ENCODE measurements at regions of chr6 and their contacts with region 1.

Region 1: GRCh38 chr6:46848684-46849360 is 55.6 kb downstream of the MEP1A start:
- DNase-seq: peak; percentile 52 to 66 (median 62)
- H3K4me3 ChIP-seq: peak overlapping the region in 5 of 7 experiments; percentile 35 to 63 (median 48)
- H3K27ac ChIP-seq: no peak overlapping the region
- H3K4me1 ChIP-seq: peaks cover 1 to 17% (median 4%) of the 10 kb centered on the region in 4 experiments
- H3K27me3 ChIP-seq: no peaks in the 10 kb centered on the region

Region 2: DNA sequence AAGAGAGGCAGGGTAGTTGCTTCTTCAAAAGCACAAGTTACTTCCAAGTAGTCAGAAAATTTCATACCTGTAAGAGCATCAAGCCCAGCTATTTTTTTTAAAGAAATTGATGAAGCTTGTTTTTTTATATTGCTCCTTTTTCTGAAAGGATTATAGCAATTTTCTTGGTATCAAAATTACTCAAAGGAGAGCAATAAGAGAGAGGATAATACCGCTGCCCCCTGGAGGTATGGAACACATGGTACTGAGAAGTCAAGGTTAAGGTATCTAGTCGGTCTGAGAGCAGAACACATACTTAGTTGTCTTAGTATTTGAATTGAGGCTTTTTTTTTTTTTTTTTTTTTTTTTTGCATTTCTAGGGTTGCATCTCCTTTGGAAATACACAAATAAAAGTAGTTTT is 13.6 kb after region 1 on chr6:
- CTCF ChIA-PET with region 1: interaction called, 19 read pairs
- POLR2A ChIA-PET with region 1: no interaction called
- DNase-seq: peak in 2 of 3 donors; percentile 12 to 22
- H3K4me3 ChIP-seq: no peak overlapping the region
- H3K27ac ChIP-seq: no peak overlapping the region
- H3K4me1 ChIP-seq: no peaks in the 10 kb centered on the region
- H3K27me3 ChIP-seq: no peaks in the 10 kb centered on the region

Region 3: GRCh38 chr6:47047479-47048407 is 198.9 kb after region 1 on chr6:
- CTCF ChIA-PET with region 1: interaction called, 70 read pairs
- POLR2A ChIA-PET with region 1: no interaction called
- DNase-seq: peak; percentile 92 to 98 (median 97)
- H3K4me3 ChIP-seq: no peak overlapping the region
- H3K27ac ChIP-seq: no peak overlapping the region
- H3K4me1 ChIP-seq: peaks cover 26 to 39% (median 31%) of the 10 kb centered on the region in 4 experiments
- H3K27me3 ChIP-seq: no peaks in the 10 kb centered on the region

Measured in common myeloid progenitor, CD34-positive (primary cell).